Right lobe of liver (tissue), 6 donors: ENCODE measurements at regions of chrX and their contacts with region 1.

Region 1: GRCh38 chrX:427812-428725 is 41.4 kb upstream of the PPP2R3B start:
- DNase-seq: no peak
- ATAC-seq: no peak
- H3K4me3 ChIP-seq: no peak overlapping the region
- H3K27ac ChIP-seq: no peak overlapping the region
- H3K4me1 ChIP-seq: no peaks in the 10 kb centered on the region
- H3K27me3 ChIP-seq: no peaks in the 10 kb centered on the region
- CTCF ChIP-seq: no peak
- POLR2A ChIP-seq: no peak

Region 2: GRCh38 chrX:261167-261918 is 166.7 kb before region 1 on chrX:
- intact Hi-C with region 1: no loop called
- DNase-seq: peak in 1 of 3 donors; percentile 49
- ATAC-seq: no peak
- H3K4me3 ChIP-seq: no peak overlapping the region
- H3K27ac ChIP-seq: peak overlapping the region in 2 of 3 donors; percentile 84 to 91
- H3K4me1 ChIP-seq: peaks cover 0 to 38% (median 14%) of the 10 kb centered on the region in 4 donors
- H3K27me3 ChIP-seq: no peaks in the 10 kb centered on the region
- CTCF ChIP-seq: no peak
- POLR2A ChIP-seq: no peak

Region 3: GRCh38 chrX:480861-481417 is 52.9 kb after region 1 on chrX:
- intact Hi-C with region 1: loop called in 1 of 2 experiments (anchors 10 kb)
- DNase-seq: no peak
- ATAC-seq: no peak
- H3K4me3 ChIP-seq: no peak overlapping the region
- H3K27ac ChIP-seq: no peak overlapping the region
- H3K4me1 ChIP-seq: no peaks in the 10 kb centered on the region
- H3K27me3 ChIP-seq: no peaks in the 10 kb centered on the region
- CTCF ChIP-seq: no peak
- POLR2A ChIP-seq: no peak